Caco-2 (cell line): ENCODE measurements at regions of chr5 and their contacts with region 1.

Region 1: DNA sequence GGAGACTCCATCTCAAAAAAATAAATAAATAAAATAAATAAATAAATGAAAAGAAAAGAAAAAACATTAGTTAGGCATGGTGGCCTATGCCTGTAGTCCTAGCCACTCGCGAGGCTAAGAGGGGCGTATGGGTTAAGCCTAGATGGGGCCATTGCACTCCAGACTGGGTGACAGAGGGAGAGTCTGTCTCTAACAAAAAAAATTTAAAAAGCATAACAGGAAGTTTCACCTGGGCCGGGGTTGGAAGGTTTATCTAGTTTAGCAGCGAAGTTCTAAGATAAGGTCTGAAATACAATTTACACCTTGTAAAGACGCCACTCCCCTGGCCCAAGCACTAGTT is 18.0 kb downstream of the ZMAT2 start:
- DNase-seq: no peak
- H3K4me3 ChIP-seq: peak overlapping the region; percentile 41
- H3K4me3 Mint-ChIP-seq: peak overlapping the region; percentile 99
- H3K27ac Mint-ChIP-seq: peak overlapping the region; percentile 100
- H3K4me1 ChIP-seq: no peaks in the 10 kb centered on the region
- H3K4me1 Mint-ChIP-seq: peaks cover 15% of the 10 kb centered on the region
- H3K27me3 ChIP-seq: no peaks in the 10 kb centered on the region
- H3K27me3 Mint-ChIP-seq: peaks cover 8% of the 10 kb centered on the region
- CTCF ChIP-seq: no peak

Region 2: DNA sequence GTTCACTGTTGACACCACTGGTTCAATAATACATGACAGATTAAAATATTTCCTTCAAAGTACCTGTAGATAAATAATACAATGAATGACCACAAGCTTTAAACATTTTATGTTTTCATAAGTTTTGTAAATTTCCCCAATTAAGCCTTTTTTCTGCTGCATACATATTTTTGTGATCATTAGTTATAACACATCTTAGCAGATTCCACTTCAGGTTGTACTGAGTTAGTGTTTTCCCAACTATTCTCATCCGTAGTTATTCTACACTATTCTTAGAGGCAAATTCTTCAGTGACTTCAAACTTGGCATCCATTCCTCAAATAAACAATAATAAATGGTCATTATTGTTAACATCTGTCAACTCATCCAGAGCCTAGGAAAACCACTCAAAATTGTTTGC is 776.0 kb before region 1 on chr5:
- CTCF ChIA-PET with region 1: no interaction called
- POLR2A ChIA-PET with region 1: no interaction called
- intact Hi-C with region 1: no loop called
- DNase-seq: no peak
- H3K4me3 ChIP-seq: no peak overlapping the region
- H3K4me3 Mint-ChIP-seq: no peak overlapping the region
- H3K27ac Mint-ChIP-seq: no peak overlapping the region
- H3K4me1 ChIP-seq: no peaks in the 10 kb centered on the region
- H3K4me1 Mint-ChIP-seq: no peaks in the 10 kb centered on the region
- H3K27me3 ChIP-seq: no peaks in the 10 kb centered on the region
- H3K27me3 Mint-ChIP-seq: peaks cover 23% of the 10 kb centered on the region
- CTCF ChIP-seq: no peak

Region 3: DNA sequence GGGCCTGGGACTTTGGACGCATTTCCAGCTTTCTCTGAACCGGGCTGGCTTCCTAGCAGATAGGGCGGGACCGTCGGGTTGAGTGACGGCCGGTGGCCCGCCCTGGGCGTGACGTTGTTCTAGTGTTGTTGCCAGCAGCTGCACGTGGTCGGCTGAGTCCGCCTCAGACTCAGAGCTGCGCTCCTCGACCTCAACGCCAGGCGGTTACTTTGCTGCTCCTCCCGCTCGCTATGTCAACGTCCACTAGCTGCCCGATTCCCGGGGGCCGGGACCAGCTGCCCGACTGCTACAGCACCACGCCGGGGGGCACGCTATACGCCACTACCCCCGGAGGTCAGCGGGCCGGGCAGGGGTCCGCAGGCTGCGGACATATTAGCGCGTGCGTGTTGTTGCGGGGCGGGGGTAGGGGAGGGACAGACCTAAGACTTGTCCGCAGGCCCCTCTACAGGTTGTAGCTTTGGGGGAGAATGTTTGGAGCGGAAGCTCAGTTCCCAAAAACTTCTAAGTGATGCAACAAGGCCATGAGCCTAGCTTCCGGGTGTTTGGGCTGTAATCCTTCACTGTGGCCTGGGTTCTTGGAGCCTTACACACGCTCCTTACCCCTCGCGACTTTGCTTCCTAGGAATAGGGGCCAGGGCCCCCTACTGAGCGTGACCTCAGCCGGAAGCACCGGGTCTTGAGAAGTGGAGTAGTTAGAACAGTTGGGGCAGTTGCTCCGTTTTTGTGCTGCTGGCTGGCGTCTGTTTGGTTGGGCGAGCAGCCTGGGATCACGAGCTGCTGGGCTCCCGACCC is 170.5 kb before region 1 on chr5 and contains the start of gene EIF4EBP3:
- CTCF ChIA-PET with region 1: interaction called, 8 read pairs
- POLR2A ChIA-PET with region 1: interaction called, 3 read pairs
- intact Hi-C with region 1: loop called (anchors 2 kb)
- DNase-seq: peak; percentile 97
- H3K4me3 ChIP-seq: peak within 1 kb of the TSS; percentile 38
- H3K4me3 Mint-ChIP-seq: peak within 1 kb of the TSS; percentile 69
- H3K27ac Mint-ChIP-seq: peak within 1 kb of the TSS; percentile 88
- H3K4me1 ChIP-seq: peaks cover 13% of the 10 kb centered on the region
- H3K4me1 Mint-ChIP-seq: peaks cover 19% of the 10 kb centered on the region
- H3K27me3 ChIP-seq: no peaks in the 10 kb centered on the region
- H3K27me3 Mint-ChIP-seq: no peaks in the 10 kb centered on the region
- CTCF ChIP-seq: peak; percentile 37 to 48
- total RNA-seq, gene EIF4EBP3: 7.6 and 8.0 TPM in 2 replicates

Region 4: GRCh38 chr5:140575309-140575708 is 142.9 kb before region 1 on chr5:
- CTCF ChIA-PET with region 1: no interaction called
- POLR2A ChIA-PET with region 1: no interaction called
- intact Hi-C with region 1: loop called (anchors 1 kb)
- DNase-seq: peak; percentile 60 to 61
- H3K4me3 ChIP-seq: no peak overlapping the region
- H3K4me3 Mint-ChIP-seq: no peak overlapping the region
- H3K27ac Mint-ChIP-seq: no peak overlapping the region
- H3K4me1 ChIP-seq: peaks cover 7% of the 10 kb centered on the region
- H3K4me1 Mint-ChIP-seq: peaks cover 19% of the 10 kb centered on the region
- H3K27me3 ChIP-seq: no peaks in the 10 kb centered on the region
- H3K27me3 Mint-ChIP-seq: no peaks in the 10 kb centered on the region
- CTCF ChIP-seq: peak; percentile 31 to 39

Region 5: GRCh38 chr5:140609126-140609525 is 109.1 kb before region 1 on chr5:
- CTCF ChIA-PET with region 1: no interaction called
- POLR2A ChIA-PET with region 1: no interaction called
- intact Hi-C with region 1: no loop called
- DNase-seq: no peak
- H3K4me3 ChIP-seq: no peak overlapping the region
- H3K4me3 Mint-ChIP-seq: no peak overlapping the region
- H3K27ac Mint-ChIP-seq: no peak overlapping the region
- H3K4me1 ChIP-seq: no peaks in the 10 kb centered on the region
- H3K4me1 Mint-ChIP-seq: no peaks in the 10 kb centered on the region
- H3K27me3 ChIP-seq: no peaks in the 10 kb centered on the region
- H3K27me3 Mint-ChIP-seq: no peaks in the 10 kb centered on the region
- CTCF ChIP-seq: no peak

Region 6: GRCh38 chr5:140664359-140665119 is 53.7 kb before region 1 on chr5 and contains the start of gene WDR55:
- CTCF ChIA-PET with region 1: interaction called, 3 read pairs
- POLR2A ChIA-PET with region 1: no interaction called
- intact Hi-C with region 1: loop called (anchors 1 kb)
- DNase-seq: peak; percentile 97
- H3K4me3 ChIP-seq: peak within 1 kb of the TSS; percentile 86
- H3K4me3 Mint-ChIP-seq: peak within 1 kb of the TSS; percentile 98
- H3K27ac Mint-ChIP-seq: peak within 1 kb of the TSS; percentile 89
- H3K4me1 ChIP-seq: peaks cover 7% of the 10 kb centered on the region; the same call in 1 of the 2 replicates
- H3K4me1 Mint-ChIP-seq: peaks cover 14% of the 10 kb centered on the region
- H3K27me3 ChIP-seq: no peaks in the 10 kb centered on the region
- H3K27me3 Mint-ChIP-seq: no peaks in the 10 kb centered on the region
- CTCF ChIP-seq: no peak
- total RNA-seq, gene WDR55: 38.8 and 40.2 TPM in 2 replicates

Region 7: GRCh38 chr5:140690941-140691924 is 27.0 kb before region 1 on chr5 and contains the starts of genes HARS1 and HARS2:
- CTCF ChIA-PET with region 1: interaction called, 7 read pairs
- POLR2A ChIA-PET with region 1: interaction called, 9 read pairs
- intact Hi-C with region 1: loop called (anchors 2 kb)
- DNase-seq: peak; percentile 94 to 96
- H3K4me3 ChIP-seq: peak within 1 kb of the TSS; percentile 96
- H3K4me3 Mint-ChIP-seq: peak within 1 kb of the TSS; percentile 94
- H3K27ac Mint-ChIP-seq: peak within 1 kb of the TSS; percentile 89
- H3K4me1 ChIP-seq: peaks cover 16% of the 10 kb centered on the region; the same call in 1 of the 2 replicates
- H3K4me1 Mint-ChIP-seq: no peaks in the 10 kb centered on the region
- H3K27me3 ChIP-seq: no peaks in the 10 kb centered on the region
- H3K27me3 Mint-ChIP-seq: no peaks in the 10 kb centered on the region
- CTCF ChIP-seq: no peak
- total RNA-seq, gene HARS1: 82.4 and 83.5 TPM in 2 replicates
- total RNA-seq, gene HARS2: 36.5 and 38.6 TPM in 2 replicates

Region 8: GRCh38 chr5:140700177-140701144 is 17.8 kb before region 1 on chr5 and contains the start of gene ZMAT2:
- CTCF ChIA-PET with region 1: interaction called, 8 read pairs
- POLR2A ChIA-PET with region 1: interaction called, 24 read pairs
- intact Hi-C with region 1: loop called (anchors 1 kb)
- DNase-seq: peak; percentile 94 to 96
- H3K4me3 ChIP-seq: peak within 1 kb of the TSS; percentile 67
- H3K4me3 Mint-ChIP-seq: peak within 1 kb of the TSS; percentile 85
- H3K27ac Mint-ChIP-seq: peak within 1 kb of the TSS; percentile 92
- H3K4me1 ChIP-seq: no peaks in the 10 kb centered on the region; the same call in 1 of the 2 replicates
- H3K4me1 Mint-ChIP-seq: no peaks in the 10 kb centered on the region
- H3K27me3 ChIP-seq: no peaks in the 10 kb centered on the region
- H3K27me3 Mint-ChIP-seq: no peaks in the 10 kb centered on the region
- CTCF ChIP-seq: no peak
- total RNA-seq, gene ZMAT2: 73.1 and 76.6 TPM in 2 replicates

Region 9: DNA sequence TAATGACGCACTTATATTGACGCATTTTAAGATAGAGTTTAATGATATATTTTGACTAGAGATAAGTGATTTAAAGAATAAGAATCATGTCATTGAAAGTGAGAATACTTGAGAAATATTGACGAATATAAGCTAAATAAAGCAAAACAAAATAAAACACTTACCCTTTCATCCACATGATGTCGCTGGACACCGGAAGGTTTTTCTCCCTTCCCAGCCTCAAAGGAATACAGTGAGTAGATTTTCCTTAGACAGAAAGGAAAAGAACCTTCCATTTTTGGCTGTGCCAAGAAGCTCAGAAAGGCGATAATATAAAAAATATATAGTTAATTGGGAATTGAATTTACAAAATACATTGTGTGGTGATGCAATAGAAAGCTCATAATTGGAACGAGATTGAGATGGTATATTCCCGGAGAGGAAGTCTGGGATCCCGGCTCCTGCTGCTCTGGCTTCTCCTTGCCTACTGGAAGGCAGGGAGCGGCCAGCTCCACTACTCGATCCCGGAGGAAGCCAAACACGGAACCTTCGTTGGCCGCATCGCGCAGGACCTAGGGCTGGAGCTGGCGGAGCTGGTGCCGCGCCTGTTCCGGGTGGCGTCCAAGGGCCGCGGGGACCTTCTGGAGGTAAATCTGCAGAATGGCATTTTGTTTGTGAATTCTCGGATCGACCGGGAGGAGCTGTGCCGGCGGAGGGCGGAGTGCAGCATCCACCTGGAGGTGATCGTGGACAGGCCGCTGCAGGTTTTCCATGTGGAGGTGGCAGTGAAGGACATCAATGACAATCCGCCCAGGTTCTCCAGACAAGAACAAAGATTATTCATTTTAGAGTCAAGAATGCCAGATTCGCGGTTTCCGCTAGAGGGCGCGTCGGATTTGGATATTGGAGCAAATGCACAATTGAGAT is 103.4 kb after region 1 on chr5 and contains the start of gene PCDHA5:
- CTCF ChIA-PET with region 1: no interaction called
- POLR2A ChIA-PET with region 1: no interaction called
- intact Hi-C with region 1: no loop called
- DNase-seq: no peak
- H3K4me3 ChIP-seq: no peak within 1 kb of the TSS
- H3K4me3 Mint-ChIP-seq: no peak within 1 kb of the TSS
- H3K27ac Mint-ChIP-seq: no peak within 1 kb of the TSS
- H3K4me1 ChIP-seq: no peaks in the 10 kb centered on the region
- H3K4me1 Mint-ChIP-seq: no peaks in the 10 kb centered on the region
- H3K27me3 ChIP-seq: no peaks in the 10 kb centered on the region
- H3K27me3 Mint-ChIP-seq: no peaks in the 10 kb centered on the region
- CTCF ChIP-seq: no peak
- total RNA-seq, gene PCDHA5: not detected in 2 replicates